PC-9 (cell line): ENCODE measurements at regions of chr5 and their contacts with region 1.

Region 1: DNA sequence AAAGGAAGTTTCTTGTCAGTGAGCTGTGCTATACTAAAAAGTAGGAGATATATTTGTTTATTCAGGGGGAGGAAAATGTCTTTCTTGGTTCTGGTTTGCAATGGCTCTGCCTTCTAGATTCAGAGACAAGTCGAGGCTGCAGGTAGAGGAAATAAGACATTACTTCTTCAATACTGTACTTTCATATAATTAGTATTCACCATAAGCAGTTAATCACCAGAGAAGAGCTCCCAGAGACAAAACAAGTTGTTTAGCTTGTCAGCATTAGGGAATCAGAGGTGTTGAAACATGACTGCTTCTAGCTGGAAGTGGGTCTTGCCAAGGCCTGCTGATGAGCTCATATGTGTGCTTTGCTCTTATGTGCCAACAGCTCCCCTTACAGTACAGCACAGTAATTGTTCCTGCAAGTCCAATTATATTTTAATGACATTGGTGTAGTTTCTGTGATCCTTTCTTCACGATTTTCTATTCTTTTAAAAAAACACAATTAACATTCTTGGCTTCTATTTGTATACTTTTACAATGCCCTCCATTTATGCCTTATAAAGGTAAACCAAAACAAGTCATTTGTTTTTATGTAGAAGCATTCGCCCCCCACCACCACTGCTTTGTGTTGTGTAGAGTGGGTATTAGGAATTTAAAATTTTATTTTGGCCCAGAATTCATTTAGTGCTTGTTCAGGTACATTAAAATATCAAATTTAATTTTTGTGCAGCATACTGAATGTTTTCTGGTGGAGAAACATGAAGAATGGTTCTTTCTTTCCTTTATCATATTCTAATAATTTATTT is 112.2 kb downstream of the RPS23 start:
- DNase-seq: peak; percentile 28 to 79
- H3K4me3 ChIP-seq: no peak overlapping the region
- H3K27ac ChIP-seq: no peak overlapping the region
- H3K4me1 ChIP-seq: peaks cover 7% of the 10 kb centered on the region; the same call in 1 of the 2 replicates
- H3K27me3 ChIP-seq: no peaks in the 10 kb centered on the region
- CTCF ChIP-seq: peak; percentile 83

Region 2: DNA sequence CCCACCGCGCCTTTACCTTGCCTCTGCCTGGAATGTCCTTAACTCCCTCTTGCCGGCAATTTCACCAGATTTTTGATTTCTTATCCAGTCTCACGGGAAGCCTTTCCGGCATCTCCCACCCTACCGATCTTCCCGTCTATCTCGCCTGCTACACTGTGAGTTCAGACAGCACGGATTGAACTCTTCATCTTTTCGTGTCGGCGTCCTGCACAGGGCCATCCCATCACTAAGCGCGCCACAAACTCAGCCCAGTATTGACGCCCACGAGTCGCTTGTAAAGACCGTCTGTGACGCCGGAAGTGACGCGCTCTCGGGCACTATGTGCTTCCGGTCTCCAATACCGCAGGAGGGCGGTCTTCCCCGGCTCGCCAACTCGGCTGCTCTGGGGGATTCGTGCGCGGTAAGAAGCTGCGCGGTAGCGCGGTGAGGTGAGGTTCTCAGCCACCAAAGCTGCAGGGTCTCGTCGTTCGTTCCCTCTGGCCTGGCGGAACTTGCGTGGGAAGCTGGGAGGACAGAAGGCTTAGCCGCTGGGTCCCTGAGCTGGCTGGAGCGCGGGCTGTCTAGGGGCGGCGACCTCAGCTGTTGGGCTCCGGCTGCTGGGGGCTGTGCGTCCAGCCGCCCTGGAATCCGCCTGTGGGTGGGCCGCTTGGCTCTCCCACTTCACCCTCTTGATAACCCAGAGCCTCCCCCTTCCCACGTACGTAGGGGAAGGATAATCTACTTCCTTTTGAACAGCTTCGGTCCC is 864.5 kb before region 1 on chr5 and contains the start of gene ZCCHC9:
- CTCF ChIA-PET with region 1: interaction called, 10 read pairs
- POLR2A ChIA-PET with region 1: no interaction called
- intact Hi-C with region 1: no loop called
- DNase-seq: peak; percentile 82 to 83
- H3K4me3 ChIP-seq: peak within 1 kb of the TSS; percentile 81
- H3K27ac ChIP-seq: peak within 1 kb of the TSS; percentile 48
- H3K4me1 ChIP-seq: peaks cover 27% of the 10 kb centered on the region
- H3K27me3 ChIP-seq: no peaks in the 10 kb centered on the region
- CTCF ChIP-seq: no peak; the same call in 1 of the 2 replicates
- total RNA-seq, gene ZCCHC9: 22.0 and 30.1 TPM in 2 replicates

Region 3: GRCh38 chr5:81425569-81425968 is 740.4 kb before region 1 on chr5:
- CTCF ChIA-PET with region 1: interaction called, 3 read pairs
- POLR2A ChIA-PET with region 1: no interaction called
- intact Hi-C with region 1: loop called (anchors 1 kb)
- DNase-seq: peak; percentile 2 to 55
- H3K4me3 ChIP-seq: no peak overlapping the region
- H3K27ac ChIP-seq: no peak overlapping the region
- H3K4me1 ChIP-seq: peaks cover 35% of the 10 kb centered on the region
- H3K27me3 ChIP-seq: no peaks in the 10 kb centered on the region
- CTCF ChIP-seq: peak; percentile 83

Region 4: GRCh38 chr5:81787474-81788242 is 378.3 kb before region 1 on chr5:
- CTCF ChIA-PET with region 1: no interaction called
- POLR2A ChIA-PET with region 1: no interaction called
- intact Hi-C with region 1: loop called (anchors 2 kb)
- DNase-seq: peak; percentile 43 to 83
- H3K4me3 ChIP-seq: no peak overlapping the region
- H3K27ac ChIP-seq: peak overlapping the region; percentile 81
- H3K4me1 ChIP-seq: peaks cover 24% of the 10 kb centered on the region
- H3K27me3 ChIP-seq: no peaks in the 10 kb centered on the region
- CTCF ChIP-seq: no peak